AG04450 (cell line): ENCODE measurements at regions of chr6 and their contacts with region 1.

Region 1: DNA sequence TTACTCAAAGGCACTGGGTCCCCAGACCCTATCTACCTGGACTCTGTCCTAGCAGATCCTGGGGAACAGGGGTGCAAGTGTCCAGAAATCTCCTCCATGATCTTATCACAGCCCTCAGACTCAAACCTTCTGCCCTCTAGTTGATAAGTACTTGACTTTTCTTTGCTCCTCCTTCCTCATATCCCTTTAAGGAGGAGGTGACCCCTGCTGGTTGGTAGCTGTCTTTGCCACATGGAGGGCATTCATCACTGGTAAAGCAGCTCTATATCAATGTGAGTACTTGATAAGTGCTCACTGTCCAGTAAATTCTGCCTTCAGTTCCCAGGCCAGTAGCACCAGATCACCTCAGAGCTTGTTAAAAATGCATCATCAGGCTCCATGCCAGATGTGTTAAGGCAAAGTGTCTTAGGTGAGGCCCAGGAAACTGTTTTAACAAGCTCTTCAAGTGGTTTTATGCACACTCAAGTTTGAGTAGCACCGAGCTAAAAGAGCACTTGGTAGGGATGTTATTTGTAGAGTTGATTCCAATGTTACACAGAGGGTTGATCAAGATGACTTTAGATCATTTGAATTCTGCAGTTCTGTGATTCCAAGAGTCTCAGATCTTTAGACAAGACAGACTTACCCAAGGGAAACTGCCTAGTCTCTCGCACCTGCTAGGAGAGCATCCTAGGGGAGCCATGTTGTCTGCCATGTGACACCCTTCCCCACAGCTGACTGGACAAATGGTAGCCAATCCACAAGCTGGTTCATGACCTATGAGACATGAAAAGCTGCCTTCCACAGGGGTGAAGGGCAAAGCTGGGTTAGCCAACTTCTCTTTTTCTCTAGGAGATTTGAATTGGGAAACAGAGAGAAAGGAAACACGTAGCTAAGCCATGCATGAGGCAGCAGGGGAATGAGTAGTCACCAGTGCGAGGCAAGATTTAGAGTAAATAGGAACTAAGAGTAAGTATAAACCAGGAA is 18.6 kb downstream of the TREML2 start:
- DNase-seq: peak; percentile 4
- H3K4me3 ChIP-seq: no peak overlapping the region
- H3K27ac ChIP-seq: no peak overlapping the region
- H3K27me3 ChIP-seq: peaks cover 4% of the 10 kb centered on the region
- CTCF ChIP-seq: peak; percentile 71

Region 2: DNA sequence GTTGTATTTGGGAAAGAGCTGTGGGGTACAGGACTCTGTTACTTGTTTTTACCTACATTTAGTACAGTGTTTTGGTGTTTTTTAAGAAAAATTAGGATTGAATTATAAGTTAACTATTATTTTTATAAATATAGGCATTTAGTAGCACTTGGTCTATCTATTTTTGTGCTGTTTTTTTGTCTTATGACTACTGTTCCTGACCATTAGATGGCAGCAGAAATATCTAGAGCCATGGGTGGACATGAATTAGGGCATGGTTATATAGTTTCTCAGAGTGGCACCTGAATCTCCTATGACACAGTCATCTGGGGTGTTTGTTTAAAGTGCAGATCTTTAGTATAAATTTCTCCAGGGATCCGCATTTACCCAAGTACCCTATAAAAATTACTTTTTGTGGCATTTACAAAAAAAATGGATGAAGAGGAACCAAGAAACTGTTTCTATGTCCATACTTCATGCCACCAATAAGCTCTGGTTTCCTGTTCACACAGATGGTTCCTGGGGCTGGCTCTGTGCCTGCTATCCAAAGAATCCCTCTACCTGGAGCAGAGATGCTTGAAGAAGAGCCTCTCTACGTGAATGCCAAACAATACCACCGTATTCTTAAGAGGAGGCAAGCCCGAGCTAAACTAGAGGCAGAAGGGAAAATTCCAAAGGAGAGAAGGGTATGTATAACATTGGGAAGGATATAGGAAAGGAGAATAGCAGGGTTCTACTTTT is 89.8 kb before region 1 on chr6:
- CTCF ChIA-PET with region 1: interaction called, 83 read pairs
- POLR2A ChIA-PET with region 1: no interaction called
- DNase-seq: no peak
- H3K4me3 ChIP-seq: no peak overlapping the region
- H3K27ac ChIP-seq: no peak overlapping the region
- H3K27me3 ChIP-seq: no peaks in the 10 kb centered on the region
- CTCF ChIP-seq: peak; percentile 56

Region 3: DNA sequence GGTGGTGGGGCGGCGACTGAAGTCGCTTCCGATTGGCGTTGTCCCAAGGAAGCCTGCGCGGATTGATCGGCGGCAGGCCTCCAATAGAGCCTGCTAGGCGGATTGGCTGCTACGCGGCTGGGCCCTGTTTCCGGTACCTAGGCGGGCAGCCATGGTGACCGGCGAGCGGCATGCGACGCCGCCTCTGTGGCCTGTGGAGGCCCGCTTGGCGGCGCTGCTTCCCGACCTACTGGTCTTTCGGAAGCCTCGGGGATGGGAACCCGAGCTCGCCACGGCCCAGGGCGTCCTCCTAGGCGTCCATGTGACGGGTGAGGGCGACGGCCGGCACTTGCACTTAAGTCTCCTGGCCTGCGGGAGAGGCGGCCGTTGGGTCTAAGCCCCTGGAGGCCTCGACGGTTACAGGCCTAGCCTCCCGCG is 81.5 kb before region 1 on chr6:
- CTCF ChIA-PET with region 1: interaction called, 12 read pairs
- POLR2A ChIA-PET with region 1: no interaction called
- DNase-seq: no peak
- H3K4me3 ChIP-seq: no peak overlapping the region
- H3K27ac ChIP-seq: no peak overlapping the region
- H3K27me3 ChIP-seq: no peaks in the 10 kb centered on the region
- CTCF ChIP-seq: no peak